Gastrocnemius medialis (tissue), 4 donors: ENCODE measurements at regions of chr1 and their contacts with region 1.

Region 1: GRCh38 chr1:228165372-228166169 is at the start of gene IBA57:
- DNase-seq: peak; percentile 99
- ATAC-seq: peak; percentile 78 to 80
- H3K4me3 ChIP-seq: peak within 1 kb of the TSS; percentile 64 to 96 (median 66)
- H3K27ac ChIP-seq: peak within 1 kb of the TSS; percentile 97 to 100 (median 99)
- H3K4me1 ChIP-seq: peaks cover 31 to 39% of the 10 kb centered on the region in 2 donors
- H3K27me3 ChIP-seq: no peaks in the 10 kb centered on the region
- CTCF ChIP-seq: peak; percentile 89 to 100 (median 99)
- POLR2A ChIP-seq: peak; percentile 96 to 97
- total RNA-seq, gene IBA57: 4.9 to 15.7 (median 12.3) TPM

Region 2: GRCh38 chr1:228139944-228140656 is 25.5 kb before region 1 on chr1 and contains the start of gene GUK1:
- in situ Hi-C with region 1: no loop called
- intact Hi-C with region 1: loop called (anchors 1 kb)
- DNase-seq: peak; percentile 100
- ATAC-seq: peak; percentile 89 to 90
- H3K4me3 ChIP-seq: peak within 1 kb of the TSS; percentile 83 to 100 (median 96)
- H3K27ac ChIP-seq: peak within 1 kb of the TSS; percentile 94 to 99 (median 96)
- H3K4me1 ChIP-seq: peaks cover 32 to 37% of the 10 kb centered on the region in 2 donors
- H3K27me3 ChIP-seq: no peaks in the 10 kb centered on the region
- CTCF ChIP-seq: peak in 3 of 5 experiments; percentile 7 to 39 (median 28)
- POLR2A ChIP-seq: peak; percentile 98 to 99
- total RNA-seq, gene GUK1: 161 to 230 (median 183) TPM

Region 3: DNA sequence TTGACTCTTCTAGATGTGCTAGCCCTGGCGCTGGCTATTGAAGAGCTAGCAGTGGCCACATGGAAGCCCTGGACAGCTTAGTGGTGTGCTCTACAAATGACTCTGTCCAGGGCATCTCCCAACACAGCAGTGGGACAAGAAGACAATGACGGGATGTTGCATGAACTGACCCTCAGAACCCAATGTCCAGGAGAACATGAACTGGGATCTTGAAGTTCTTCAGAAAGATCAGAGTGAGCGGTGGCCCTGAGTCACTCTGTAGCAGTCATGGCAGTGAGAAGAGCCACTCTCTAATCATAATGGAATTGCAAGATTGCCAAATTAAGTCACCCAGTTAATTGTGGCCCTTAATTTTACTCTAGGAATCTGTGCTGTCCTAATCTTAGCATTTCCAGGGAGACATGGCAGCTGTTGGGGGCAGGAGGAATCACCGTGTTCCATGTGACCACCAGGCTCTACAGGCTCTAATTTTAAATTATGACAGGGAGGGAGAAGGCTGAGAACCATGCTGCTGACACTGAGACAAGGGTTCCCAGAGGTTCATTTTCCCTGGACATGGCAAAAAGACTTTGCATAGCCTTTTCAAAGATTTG is 32.1 kb after region 1 on chr1:
- in situ Hi-C with region 1: no loop called
- intact Hi-C with region 1: loop called (anchors 1 kb)
- DNase-seq: peak; percentile 69 to 78
- ATAC-seq: peak; percentile 93 to 96
- H3K4me3 ChIP-seq: no peak overlapping the region
- H3K27ac ChIP-seq: peak overlapping the region; percentile 87 to 94 (median 92)
- H3K4me1 ChIP-seq: peaks cover 22 to 24% of the 10 kb centered on the region in 2 donors
- H3K27me3 ChIP-seq: no peaks in the 10 kb centered on the region
- CTCF ChIP-seq: no peak
- POLR2A ChIP-seq: peak; percentile 46 to 48

Region 4: DNA sequence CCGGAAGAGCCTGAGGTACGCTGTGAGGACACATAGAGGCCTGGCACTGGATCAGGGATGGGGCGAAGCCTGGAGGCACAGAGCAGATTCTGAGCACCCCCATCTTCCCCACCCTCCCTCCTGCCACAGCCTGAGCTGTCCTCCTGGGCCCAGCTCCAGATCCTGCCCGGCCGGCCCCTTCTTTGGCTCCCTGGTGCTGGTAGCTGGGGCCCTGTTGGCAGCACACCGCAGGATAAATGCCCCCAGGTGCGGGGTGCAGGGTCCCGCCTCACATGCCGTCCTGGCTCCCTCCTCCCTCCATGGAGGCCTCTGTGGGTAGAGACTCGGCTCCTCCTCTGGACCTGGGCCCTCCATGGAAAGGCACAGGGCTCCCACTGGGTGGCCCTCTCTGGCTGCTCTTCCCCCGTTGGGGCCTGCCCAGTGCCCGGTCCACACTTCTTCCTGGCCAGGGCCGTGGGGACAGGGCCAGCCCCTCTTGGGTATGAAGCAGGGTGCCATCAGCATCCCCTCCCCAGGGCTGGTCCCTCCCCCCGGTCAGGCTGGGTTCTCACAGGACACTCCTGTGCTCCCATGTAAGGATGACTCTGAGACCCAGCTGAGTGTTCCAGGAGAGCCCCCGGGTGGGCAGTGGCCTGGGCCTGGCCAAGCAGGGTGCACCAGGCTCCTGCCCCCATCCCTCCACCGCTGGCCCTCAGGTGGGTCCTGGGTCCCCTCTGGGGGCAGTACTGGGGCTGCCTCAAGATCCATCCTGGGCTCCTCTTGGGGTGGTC is 41.2 kb after region 1 on chr1:
- in situ Hi-C with region 1: no loop called
- intact Hi-C with region 1: loop called (anchors 1 kb)
- DNase-seq: peak in 1 of 2 donors; percentile 57
- ATAC-seq: no peak
- H3K4me3 ChIP-seq: no peak overlapping the region
- H3K27ac ChIP-seq: peak overlapping the region; percentile 97 to 100 (median 100)
- H3K4me1 ChIP-seq: peaks cover 35 to 40% of the 10 kb centered on the region in 2 donors
- H3K27me3 ChIP-seq: no peaks in the 10 kb centered on the region
- CTCF ChIP-seq: no peak
- POLR2A ChIP-seq: no peak